GM10248 (cell line): ENCODE measurements at regions of chr16 and their contacts with region 1.

Region 1: DNA sequence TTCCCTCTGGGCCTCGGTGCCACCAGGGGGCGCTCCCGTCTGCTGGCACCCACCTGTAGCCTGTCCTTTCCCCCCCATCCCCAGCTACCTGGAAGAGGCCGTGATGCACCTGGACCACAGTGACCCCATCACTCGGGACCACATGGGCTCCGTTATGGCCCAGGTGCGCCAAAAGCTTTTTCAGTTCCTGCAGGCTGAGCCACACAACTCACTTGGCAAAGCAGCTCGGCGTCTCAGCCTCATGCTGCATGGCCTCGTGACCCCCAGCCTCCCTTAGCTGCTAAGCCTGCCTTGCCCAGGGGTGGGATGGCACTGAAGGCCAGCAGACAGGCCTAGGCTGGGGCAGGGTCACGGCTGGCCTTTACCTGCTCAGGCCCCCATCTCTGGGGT is 818 bp upstream of the NRN1L start:
- DNase-seq: peak; percentile 85
- CTCF ChIP-seq: peak; percentile 88

Region 2: GRCh38 chr16:67542464-67543435 is 341.1 kb before region 1 on chr16:
- CTCF ChIA-PET with region 1: no interaction called
- POLR2A ChIA-PET with region 1: no interaction called
- DNase-seq: peak; percentile 79
- CTCF ChIP-seq: no peak

Region 3: GRCh38 chr16:67760206-67760955 is 123.5 kb before region 1 on chr16:
- CTCF ChIA-PET with region 1: no interaction called
- POLR2A ChIA-PET with region 1: no interaction called
- DNase-seq: no peak
- CTCF ChIP-seq: no peak

Region 4: GRCh38 chr16:67865316-67865715 is 18.6 kb before region 1 on chr16:
- CTCF ChIA-PET with region 1: interaction called, 14 read pairs
- POLR2A ChIA-PET with region 1: interaction called, 3 read pairs
- DNase-seq: no peak
- CTCF ChIP-seq: peak; percentile 42

Region 5: DNA sequence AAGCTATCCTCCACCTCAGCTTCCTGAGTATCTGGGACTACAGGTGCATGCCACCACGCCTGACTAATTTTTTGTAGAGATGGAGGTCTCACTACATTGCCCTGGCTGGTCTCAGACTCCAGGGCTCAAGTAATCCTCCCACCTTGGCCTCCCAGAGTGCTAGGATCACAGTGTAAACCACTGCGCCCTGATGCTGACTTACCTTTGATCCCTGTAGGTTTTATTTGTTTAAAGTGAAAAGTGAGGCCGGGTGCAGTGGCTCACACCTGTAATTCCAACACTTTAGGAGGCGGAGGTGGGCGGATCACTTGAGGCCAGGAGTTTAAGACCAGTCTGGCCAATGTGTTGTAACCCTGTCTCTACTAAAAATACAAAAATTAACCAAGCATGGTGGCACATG is 17.9 kb after region 1 on chr16:
- CTCF ChIA-PET with region 1: interaction called, 17 read pairs
- POLR2A ChIA-PET with region 1: no interaction called
- DNase-seq: no peak
- CTCF ChIP-seq: no peak

Region 6: GRCh38 chr16:67917852-67918236 is 34.0 kb after region 1 on chr16:
- CTCF ChIA-PET with region 1: interaction called, 20 read pairs
- POLR2A ChIA-PET with region 1: no interaction called
- DNase-seq: no peak
- CTCF ChIP-seq: no peak

Region 7: DNA sequence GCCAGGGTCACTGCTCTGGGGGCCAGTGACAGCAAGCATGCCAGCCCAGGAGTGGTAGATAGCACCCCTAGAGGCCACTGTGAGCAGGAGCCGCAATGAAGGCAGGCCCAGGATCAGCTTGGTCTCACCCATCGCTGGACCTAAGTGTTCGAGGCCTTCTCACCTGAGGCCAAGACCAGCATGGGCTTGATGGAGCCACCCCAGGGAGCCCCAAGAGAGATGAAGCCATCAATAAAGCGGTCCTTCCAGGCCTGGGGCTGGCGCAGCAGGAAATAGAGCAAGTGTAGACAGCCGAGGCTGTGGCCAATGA is 58.3 kb after region 1 on chr16:
- CTCF ChIA-PET with region 1: interaction called, 11 read pairs
- POLR2A ChIA-PET with region 1: no interaction called
- DNase-seq: peak; percentile 75
- CTCF ChIP-seq: peak; percentile 68

Region 8: DNA sequence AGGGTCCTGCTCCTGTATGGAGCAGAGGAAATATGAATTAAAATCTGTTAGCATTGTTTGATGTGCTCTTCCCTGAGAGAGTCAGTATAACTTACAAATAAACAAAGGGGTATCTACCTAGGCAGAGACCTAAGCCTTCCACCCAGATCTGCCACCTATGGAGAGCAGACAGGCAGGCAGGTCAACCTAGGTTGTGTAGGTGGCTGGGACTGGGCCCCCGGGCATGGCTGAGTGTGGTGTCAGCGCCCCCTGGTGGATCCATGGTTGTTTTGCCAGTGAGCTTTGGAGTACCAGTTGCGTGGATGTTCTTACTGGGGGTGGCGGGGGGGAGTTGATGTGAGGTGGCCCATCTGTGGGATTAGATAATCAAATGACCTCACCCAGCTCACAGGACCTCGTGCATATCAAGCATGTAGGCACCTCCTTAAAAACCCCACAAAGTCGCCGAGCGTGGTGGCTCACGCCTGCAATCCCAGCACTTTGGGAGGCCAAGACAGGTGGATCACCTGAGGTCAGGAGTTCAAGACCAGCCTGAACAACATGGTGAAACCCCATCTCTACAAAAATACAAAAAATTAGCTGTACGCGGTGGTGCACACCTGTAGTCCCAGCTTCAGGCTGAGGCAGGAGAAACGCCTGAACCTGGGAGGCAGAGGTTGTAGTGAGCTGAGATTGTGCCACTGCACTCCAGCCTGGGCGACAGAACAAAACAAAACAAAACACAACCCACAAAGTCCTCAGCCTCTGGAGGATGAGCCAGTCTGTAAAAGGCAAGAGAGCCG is 156.8 kb after region 1 on chr16:
- CTCF ChIA-PET with region 1: interaction called, 72 read pairs
- POLR2A ChIA-PET with region 1: no interaction called
- DNase-seq: peak; percentile 87
- CTCF ChIP-seq: peak; percentile 88

Region 9: DNA sequence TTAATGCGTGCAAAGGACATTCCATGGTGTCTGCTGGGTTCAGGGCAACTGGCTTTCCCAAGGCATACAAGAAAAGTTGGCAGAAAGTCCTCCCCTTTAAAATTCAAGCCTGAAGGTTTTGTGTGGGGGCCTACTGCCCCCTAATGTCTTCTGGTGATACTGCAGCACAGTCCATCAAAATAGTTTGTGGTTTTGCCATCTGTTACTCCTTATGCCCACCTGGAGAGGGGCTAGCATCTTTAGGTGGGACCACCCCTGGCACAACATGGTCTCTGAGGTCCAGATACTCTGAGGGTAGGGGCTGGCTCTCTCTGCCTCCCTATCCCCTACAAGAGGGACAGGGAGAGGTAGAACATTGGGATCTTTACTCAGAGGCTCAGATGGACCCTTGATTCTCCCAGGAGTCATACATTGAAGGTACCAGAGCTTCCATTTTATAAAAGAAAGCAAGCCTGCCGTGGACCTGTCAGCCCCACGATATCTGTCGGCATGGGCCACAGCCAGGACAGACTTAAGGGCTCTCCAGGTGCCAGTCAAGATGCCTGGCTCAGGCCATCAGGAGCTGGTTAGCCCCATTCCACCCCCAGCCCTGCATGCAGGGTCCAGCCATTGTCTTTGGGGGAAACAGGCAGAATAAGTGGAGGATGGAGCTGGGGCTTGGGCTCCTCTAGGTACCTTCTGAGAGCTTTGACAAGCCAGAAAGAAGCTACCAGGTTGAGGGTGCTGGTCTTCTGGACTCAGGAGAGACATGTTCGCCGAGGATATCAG is 345.7 kb after region 1 on chr16:
- CTCF ChIA-PET with region 1: interaction called, 11 read pairs
- POLR2A ChIA-PET with region 1: no interaction called
- DNase-seq: peak; percentile 58
- CTCF ChIP-seq: peak; percentile 75